ENCODE measurements at regions of chr10 and their contacts with region 1.

Region 1: DNA sequence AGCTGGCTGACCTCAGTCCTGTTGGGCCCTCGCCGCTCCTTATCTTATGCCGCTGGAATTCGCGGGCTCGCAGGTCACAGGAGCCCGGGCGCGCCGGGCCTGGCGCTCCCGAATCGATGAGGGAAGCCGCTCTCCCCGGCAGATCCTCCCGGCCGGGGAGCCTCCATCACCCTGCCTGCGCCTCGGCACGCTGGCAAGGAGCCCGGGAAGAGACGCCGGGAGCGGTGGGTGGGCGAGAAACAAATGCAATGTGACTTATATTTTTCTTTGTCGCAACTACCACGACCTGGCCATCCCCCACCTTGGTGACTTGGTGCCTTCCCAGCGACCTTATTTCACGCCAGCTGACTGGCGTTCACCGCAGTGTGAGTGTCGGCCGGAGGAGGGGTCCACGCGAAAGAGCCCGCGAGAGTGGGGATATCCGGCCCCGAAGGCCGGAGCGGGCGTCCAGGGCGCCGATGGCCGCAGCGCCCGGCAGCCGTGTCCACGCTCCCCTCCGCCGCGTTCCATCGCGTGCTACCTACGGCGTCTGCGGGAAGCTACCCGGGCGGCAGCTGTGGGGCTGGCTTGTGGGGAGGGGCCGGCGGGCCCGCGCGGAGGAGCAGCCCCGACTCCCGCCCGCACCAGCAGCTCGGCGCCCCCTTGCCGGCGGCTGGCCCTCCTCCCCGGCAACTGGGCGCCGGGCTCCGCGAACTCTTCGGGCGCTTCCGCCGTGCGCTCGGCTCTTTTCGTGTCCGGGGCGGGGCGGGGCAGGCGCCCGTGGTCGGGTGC is 494 bp upstream of the BMPR1A start:
- DNase-seq: peak; percentile 57
- ATAC-seq: peak; percentile 80
- H3K4me3 ChIP-seq: peak overlapping the region; percentile 90
- H3K27ac ChIP-seq: peak overlapping the region; percentile 60
- H3K4me1 ChIP-seq: peaks cover 9% of the 10 kb centered on the region; the same call in 1 of the 2 replicates
- H3K27me3 ChIP-seq: no peaks in the 10 kb centered on the region
- CTCF ChIP-seq: no peak

Region 2: DNA sequence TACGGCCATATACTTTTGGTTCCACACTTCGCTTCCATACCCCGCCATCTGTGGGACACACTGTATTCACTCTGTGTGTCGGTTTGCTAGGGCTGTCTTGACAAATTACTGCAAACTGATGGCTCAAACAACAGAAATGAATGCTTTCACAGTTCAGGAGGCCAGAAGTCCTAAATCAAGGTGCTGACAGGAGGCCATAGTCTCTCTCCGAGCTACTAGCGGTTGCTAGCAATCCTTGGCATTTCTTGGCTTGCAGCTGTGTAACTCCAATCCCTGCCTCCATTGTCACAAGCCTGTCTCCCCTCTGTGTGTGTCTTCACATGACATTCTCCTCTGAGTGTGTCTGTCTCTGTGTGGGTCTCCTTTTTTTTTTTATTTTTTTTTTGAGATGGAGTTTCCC is 28.5 kb before region 1 on chr10:
- CTCF ChIA-PET with region 1: no interaction called
- POLR2A ChIA-PET with region 1: no interaction called
- intact Hi-C with region 1: no loop called
- DNase-seq: no peak
- ATAC-seq: no peak
- H3K4me3 ChIP-seq: no peak overlapping the region
- H3K27ac ChIP-seq: no peak overlapping the region
- H3K4me1 ChIP-seq: no peaks in the 10 kb centered on the region; the same call in 1 of the 2 replicates
- H3K27me3 ChIP-seq: no peaks in the 10 kb centered on the region
- CTCF ChIP-seq: no peak

Region 3: GRCh38 chr10:86899670-86900276 is 143.8 kb after region 1 on chr10:
- CTCF ChIA-PET with region 1: no interaction called
- POLR2A ChIA-PET with region 1: no interaction called
- intact Hi-C with region 1: loop called (anchors 1 kb)
- DNase-seq: peak; percentile 67
- ATAC-seq: peak; percentile 72
- H3K4me3 ChIP-seq: no peak overlapping the region
- H3K27ac ChIP-seq: no peak overlapping the region
- H3K4me1 ChIP-seq: no peaks in the 10 kb centered on the region
- H3K27me3 ChIP-seq: no peaks in the 10 kb centered on the region
- CTCF ChIP-seq: peak; percentile 73

Region 4: DNA sequence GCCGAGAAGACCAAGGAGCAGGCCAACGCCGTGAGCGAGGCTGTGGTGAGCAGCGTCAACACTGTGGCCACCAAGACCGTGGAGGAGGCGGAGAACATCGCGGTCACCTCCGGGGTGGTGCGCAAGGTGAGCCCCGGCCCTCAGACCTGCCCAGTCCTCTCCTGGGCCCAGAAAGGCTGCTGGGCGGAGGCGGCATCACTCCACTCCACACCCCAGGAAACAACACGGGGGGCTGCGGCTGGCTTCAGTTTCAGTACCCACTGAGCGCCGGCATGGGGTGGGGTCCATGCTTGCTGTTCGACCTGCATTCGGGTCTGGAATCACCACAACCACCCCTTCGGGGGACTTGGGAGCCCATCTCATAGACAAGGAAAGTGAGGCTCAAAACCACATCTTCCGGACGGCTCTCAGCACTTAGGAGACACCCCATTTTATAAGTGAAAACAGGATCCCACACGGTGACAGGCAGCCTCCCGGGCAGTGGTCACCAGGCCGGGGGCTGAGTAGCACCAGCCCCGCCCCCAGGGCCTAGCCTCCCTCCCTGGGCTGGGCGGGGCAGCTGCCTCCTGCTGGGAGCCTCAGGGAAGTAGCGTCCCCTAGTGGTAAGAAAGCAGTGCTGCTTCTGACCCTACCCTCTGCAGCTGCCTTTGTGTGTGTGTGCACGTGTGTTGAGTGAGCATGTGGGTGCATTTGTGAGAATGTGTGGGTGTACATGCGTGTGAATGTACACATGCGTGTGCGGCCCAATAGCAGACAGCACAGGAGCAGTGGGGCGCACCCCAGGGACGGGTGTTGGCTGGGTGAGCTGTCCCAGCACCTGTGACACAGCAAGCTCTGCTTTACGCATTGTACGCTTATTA is 204.3 kb after region 1 on chr10:
- CTCF ChIA-PET with region 1: interaction called, 12 read pairs
- POLR2A ChIA-PET with region 1: no interaction called
- intact Hi-C with region 1: no loop called
- DNase-seq: peak; percentile 71
- ATAC-seq: peak; percentile 77
- H3K4me3 ChIP-seq: no peak overlapping the region
- H3K27ac ChIP-seq: no peak overlapping the region
- H3K4me1 ChIP-seq: peaks cover 33% of the 10 kb centered on the region
- H3K27me3 ChIP-seq: no peaks in the 10 kb centered on the region
- CTCF ChIP-seq: peak; percentile 92